CD8-positive, alpha-beta T cell (primary cell): ENCODE measurements at regions of chr11 and their contacts with region 1.

Region 1: DNA sequence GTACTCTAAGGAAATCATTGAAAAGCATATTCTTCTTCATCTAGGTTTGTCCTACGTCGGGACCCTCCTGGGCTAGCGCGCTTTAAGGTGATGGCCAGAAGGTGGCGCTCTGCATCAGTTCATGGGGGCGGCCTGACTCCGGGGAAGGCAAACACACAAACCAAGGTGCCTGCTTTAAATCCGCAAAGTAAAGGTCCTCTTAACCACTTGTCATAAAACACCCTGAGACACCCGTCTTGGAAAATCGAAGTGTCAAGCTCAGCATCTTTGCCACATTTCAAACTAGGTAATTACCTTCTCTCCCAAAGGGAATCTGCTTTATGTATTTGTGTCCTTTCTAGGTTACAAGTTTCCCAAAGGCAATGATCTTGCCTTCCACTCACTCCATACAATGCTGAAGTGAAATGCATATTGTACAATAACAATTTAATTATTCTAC is 33.9 kb downstream of the LMO2 start:
- DNase-seq: peak; percentile 43 to 82 (median 75)
- ATAC-seq: peak; percentile 87
- H3K4me3 ChIP-seq: no peak overlapping the region
- H3K4me3 Mint-ChIP-seq: no peak overlapping the region
- H3K27ac ChIP-seq: no peak overlapping the region
- H3K27ac Mint-ChIP-seq: no peak overlapping the region
- H3K4me1 ChIP-seq: no peaks in the 10 kb centered on the region
- H3K4me1 Mint-ChIP-seq: no peaks in the 10 kb centered on the region
- H3K27me3 ChIP-seq: peaks cover 6 to 7% of the 10 kb centered on the region in 2 experiments
- H3K27me3 Mint-ChIP-seq: peaks cover 50% of the 10 kb centered on the region
- CTCF ChIP-seq: peak; percentile 81

Region 2: GRCh38 chr11:33970984-33971466 is 113.1 kb after region 1 on chr11:
- CTCF ChIA-PET with region 1: interaction called, 8 read pairs
- POLR2A ChIA-PET with region 1: interaction called, 3 read pairs
- intact Hi-C with region 1: loop called (anchors 1 kb)
- DNase-seq: peak in 3 of 9 experiments; percentile 17 to 51 (median 23)
- ATAC-seq: no peak
- H3K4me3 ChIP-seq: no peak overlapping the region
- H3K4me3 Mint-ChIP-seq: no peak overlapping the region
- H3K27ac ChIP-seq: no peak overlapping the region
- H3K27ac Mint-ChIP-seq: no peak overlapping the region
- H3K4me1 ChIP-seq: no peaks in the 10 kb centered on the region
- H3K4me1 Mint-ChIP-seq: no peaks in the 10 kb centered on the region
- H3K27me3 ChIP-seq: peaks cover 0 to 2% of the 10 kb centered on the region in 2 experiments
- H3K27me3 Mint-ChIP-seq: peaks cover 9% of the 10 kb centered on the region
- CTCF ChIP-seq: peak; percentile 31

Region 3: GRCh38 chr11:33987975-33988580 is 130.1 kb after region 1 on chr11:
- CTCF ChIA-PET with region 1: interaction called, 90 read pairs
- POLR2A ChIA-PET with region 1: no interaction called
- intact Hi-C with region 1: loop called (anchors 1 kb)
- DNase-seq: peak; percentile 25 to 86 (median 77)
- ATAC-seq: peak; percentile 83
- H3K4me3 ChIP-seq: no peak overlapping the region
- H3K4me3 Mint-ChIP-seq: no peak overlapping the region
- H3K27ac ChIP-seq: no peak overlapping the region
- H3K27ac Mint-ChIP-seq: no peak overlapping the region
- H3K4me1 ChIP-seq: no peaks in the 10 kb centered on the region
- H3K4me1 Mint-ChIP-seq: peaks cover 18% of the 10 kb centered on the region
- H3K27me3 ChIP-seq: peaks cover 0 to 3% of the 10 kb centered on the region in 2 experiments
- H3K27me3 Mint-ChIP-seq: peaks cover 3% of the 10 kb centered on the region
- CTCF ChIP-seq: peak; percentile 76

Region 4: DNA sequence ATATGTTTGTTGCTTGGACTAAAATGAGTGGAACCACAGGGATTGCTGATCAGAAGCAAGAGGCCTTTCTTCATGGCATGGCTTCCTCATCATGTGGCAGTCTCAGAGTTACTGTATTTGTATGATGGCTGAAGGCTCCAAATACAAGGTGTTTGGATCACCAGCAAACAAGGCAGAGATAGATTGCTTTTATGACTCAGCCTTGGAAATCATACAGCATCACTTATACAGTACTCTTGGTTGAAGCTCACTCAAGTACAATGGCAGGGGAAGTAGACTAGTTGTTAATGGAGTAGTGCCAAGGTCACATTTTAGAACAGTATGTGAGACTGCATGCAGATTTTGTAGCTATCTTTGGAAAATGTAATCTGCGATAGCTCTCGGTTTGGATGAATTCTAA is 210.2 kb after region 1 on chr11:
- CTCF ChIA-PET with region 1: no interaction called
- POLR2A ChIA-PET with region 1: no interaction called
- intact Hi-C with region 1: loop called in 1 of 2 experiments (anchors 5 kb)
- DNase-seq: no peak
- ATAC-seq: no peak
- H3K4me3 ChIP-seq: no peak overlapping the region
- H3K4me3 Mint-ChIP-seq: no peak overlapping the region
- H3K27ac ChIP-seq: no peak overlapping the region
- H3K27ac Mint-ChIP-seq: peak overlapping the region; percentile 32
- H3K4me1 ChIP-seq: peaks cover 41% of the 10 kb centered on the region
- H3K4me1 Mint-ChIP-seq: peaks cover 76% of the 10 kb centered on the region
- H3K27me3 ChIP-seq: no peaks in the 10 kb centered on the region
- H3K27me3 Mint-ChIP-seq: no peaks in the 10 kb centered on the region
- CTCF ChIP-seq: no peak

Region 5: DNA sequence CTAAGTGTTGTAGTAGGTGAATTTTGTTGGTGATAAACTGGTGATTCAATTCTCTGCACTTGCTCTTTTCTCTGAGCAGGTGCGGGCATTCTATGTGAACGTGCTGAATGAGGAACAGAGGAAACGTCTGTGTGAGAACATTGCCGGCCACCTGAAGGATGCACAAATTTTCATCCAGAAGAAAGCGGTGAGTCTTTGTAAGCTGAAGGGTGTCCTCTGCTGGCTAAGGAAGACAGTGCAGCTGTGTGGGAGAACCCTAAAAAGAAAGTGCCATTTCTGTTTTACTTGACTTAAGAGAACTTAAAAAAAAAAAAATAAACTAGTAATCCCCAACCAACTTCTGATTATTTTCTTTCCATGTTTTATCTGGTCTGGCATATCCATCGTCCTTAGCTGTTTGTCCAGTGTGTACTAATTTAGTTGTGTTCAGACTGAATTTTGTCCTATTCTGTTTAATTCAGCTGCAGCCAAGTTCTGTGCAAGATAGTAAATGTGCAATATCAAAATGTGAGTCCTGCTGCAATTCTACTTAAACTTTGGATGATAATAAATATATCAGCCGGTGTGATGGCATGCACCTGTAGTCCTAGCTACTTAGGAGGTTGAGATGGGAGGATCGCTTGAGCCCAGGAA is 610.4 kb after region 1 on chr11:
- CTCF ChIA-PET with region 1: no interaction called
- POLR2A ChIA-PET with region 1: no interaction called
- intact Hi-C with region 1: loop called in 1 of 2 experiments (anchors 10 kb)
- DNase-seq: peak in 6 of 9 experiments; percentile 5 to 55 (median 32)
- ATAC-seq: peak; percentile 76
- H3K4me3 ChIP-seq: no peak overlapping the region
- H3K4me3 Mint-ChIP-seq: no peak overlapping the region
- H3K27ac ChIP-seq: no peak overlapping the region
- H3K27ac Mint-ChIP-seq: no peak overlapping the region
- H3K4me1 ChIP-seq: no peaks in the 10 kb centered on the region
- H3K4me1 Mint-ChIP-seq: peaks cover 2% of the 10 kb centered on the region
- H3K27me3 ChIP-seq: no peaks in the 10 kb centered on the region
- H3K27me3 Mint-ChIP-seq: no peaks in the 10 kb centered on the region
- CTCF ChIP-seq: peak; percentile 65